ENCODE measurements at regions of chr2 and their contacts with region 1.

Region 1: GRCh38 chr2:117128461-117128860 is 686.0 kb upstream of the DDX18 start:
- ATAC-seq: peak in 2 of 8 experiments; percentile 39 to 59
- H3K4me3 ChIP-seq: no peak overlapping the region
- H3K27ac ChIP-seq: no peak overlapping the region
- H3K4me1 ChIP-seq: no peaks in the 10 kb centered on the region

Region 2: DNA sequence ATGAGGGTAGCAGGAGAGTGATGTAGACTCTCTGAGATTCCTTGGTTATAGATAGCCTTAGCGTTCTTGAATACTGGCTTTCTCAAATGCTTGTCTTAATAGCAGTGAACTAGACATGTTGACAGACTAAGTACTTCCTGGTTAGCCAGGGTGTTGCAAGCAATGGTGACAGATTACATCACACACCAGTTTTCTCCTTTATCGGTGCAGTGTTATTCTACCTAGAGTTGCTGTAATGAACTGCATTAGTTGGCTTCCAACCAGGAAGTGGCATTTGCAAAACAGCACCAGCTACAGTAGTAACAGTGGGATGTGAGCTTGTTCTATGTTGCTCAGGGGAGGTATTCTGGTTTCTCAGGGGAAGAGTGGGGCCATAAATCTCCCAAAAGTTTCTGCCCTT is 103.8 kb after region 1 on chr2:
- in situ Hi-C with region 1: loop called in 1 of 9 experiments (anchors 25 kb)
- ATAC-seq: peak in 3 of 8 experiments; percentile 18 to 32 (median 31)
- H3K4me3 ChIP-seq: no peak overlapping the region
- H3K27ac ChIP-seq: no peak overlapping the region
- H3K4me1 ChIP-seq: no peaks in the 10 kb centered on the region

Region 3: DNA sequence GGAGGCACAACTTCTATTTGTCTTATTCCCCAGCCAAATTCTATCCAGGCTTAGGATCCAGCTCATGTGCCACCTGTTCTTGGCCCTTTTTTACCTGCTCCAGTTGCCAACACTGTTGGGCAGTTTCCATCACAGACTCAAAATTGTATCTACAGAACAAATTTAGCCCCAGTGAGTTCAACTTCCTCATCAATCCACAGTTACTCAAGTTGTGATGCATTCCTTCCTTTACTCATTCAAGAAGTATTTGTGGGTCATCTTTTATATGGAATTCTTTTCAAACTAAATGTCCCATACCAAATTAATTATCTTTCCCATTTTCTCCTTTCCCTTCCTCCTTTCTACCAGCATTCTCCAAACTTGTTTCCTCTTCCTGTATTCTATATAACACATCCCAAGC is 673.4 kb after region 1 on chr2:
- in situ Hi-C with region 1: no loop called
- ATAC-seq: no peak
- H3K4me3 ChIP-seq: no peak overlapping the region
- H3K27ac ChIP-seq: no peak overlapping the region
- H3K4me1 ChIP-seq: peaks cover 0 to 6% of the 10 kb centered on the region in 2 donors

Measured in motor neuron (in vitro differentiated cells).